Sigmoid colon (tissue), 7 donors: ENCODE measurements at regions of chr6 and their contacts with region 1.

Region 1: GRCh38 chr6:53095716-53096115 is 30.5 kb downstream of the FBXO9 start:
- DNase-seq: no peak
- H3K4me3 ChIP-seq: no peak overlapping the region
- H3K27ac ChIP-seq: no peak overlapping the region
- H3K4me1 ChIP-seq: no peaks in the 10 kb centered on the region
- H3K27me3 ChIP-seq: no peaks in the 10 kb centered on the region
- CTCF ChIP-seq: no peak
- EP300 ChIP-seq: no peak
- POLR2A ChIP-seq: no peak

Region 2: DNA sequence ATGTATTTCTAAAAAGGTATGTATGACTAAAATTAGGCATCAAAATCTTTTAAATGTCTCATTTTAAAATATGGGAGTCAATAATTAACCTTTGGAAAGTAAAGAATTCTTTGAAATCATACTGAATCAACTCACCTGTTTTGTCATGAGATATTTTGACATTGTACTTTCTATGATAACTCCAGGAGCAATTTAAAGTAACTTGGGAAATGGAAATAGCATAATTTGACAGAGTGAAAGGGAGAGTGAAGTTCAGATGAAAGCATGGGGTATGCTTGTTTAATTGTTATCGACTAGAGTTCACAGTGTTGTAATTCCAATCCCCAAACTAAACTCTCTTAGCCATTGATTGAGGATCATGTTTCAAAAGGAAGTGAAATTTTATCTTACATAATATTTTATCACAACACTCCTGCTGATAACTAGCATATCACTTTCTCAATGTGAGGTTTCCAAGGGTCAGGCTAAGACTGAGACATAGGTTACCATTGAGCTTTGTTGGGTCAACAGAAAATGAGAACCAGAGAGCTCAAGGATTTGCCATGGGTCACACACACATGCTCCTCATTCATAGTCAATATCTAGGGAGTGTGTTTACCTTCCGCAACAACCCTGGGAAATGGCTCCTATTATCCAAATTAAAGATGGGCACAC is 294.4 kb before region 1 on chr6:
- intact Hi-C with region 1: no loop called
- DNase-seq: no peak
- H3K4me3 ChIP-seq: no peak overlapping the region
- H3K27ac ChIP-seq: no peak overlapping the region
- H3K4me1 ChIP-seq: no peaks in the 10 kb centered on the region
- H3K27me3 ChIP-seq: no peaks in the 10 kb centered on the region
- CTCF ChIP-seq: no peak
- EP300 ChIP-seq: no peak
- POLR2A ChIP-seq: no peak

Region 3: GRCh38 chr6:53151676-53152075 is 56.0 kb after region 1 on chr6:
- intact Hi-C with region 1: no loop called
- DNase-seq: no peak
- H3K4me3 ChIP-seq: no peak overlapping the region
- H3K27ac ChIP-seq: no peak overlapping the region
- H3K4me1 ChIP-seq: no peaks in the 10 kb centered on the region
- H3K27me3 ChIP-seq: no peaks in the 10 kb centered on the region
- CTCF ChIP-seq: no peak
- EP300 ChIP-seq: no peak
- POLR2A ChIP-seq: no peak

Region 4: GRCh38 chr6:53718597-53719460 is 623.1 kb after region 1 on chr6:
- intact Hi-C with region 1: loop called (anchors 5 kb)
- DNase-seq: no peak
- H3K4me3 ChIP-seq: no peak overlapping the region
- H3K27ac ChIP-seq: no peak overlapping the region
- H3K4me1 ChIP-seq: no peaks in the 10 kb centered on the region
- H3K27me3 ChIP-seq: no peaks in the 10 kb centered on the region
- CTCF ChIP-seq: peak in 3 of 4 experiments; percentile 49 to 79 (median 52)
- EP300 ChIP-seq: no peak
- POLR2A ChIP-seq: no peak